ENCODE measurements at regions of chr17 and their contacts with region 1.

Region 1: DNA sequence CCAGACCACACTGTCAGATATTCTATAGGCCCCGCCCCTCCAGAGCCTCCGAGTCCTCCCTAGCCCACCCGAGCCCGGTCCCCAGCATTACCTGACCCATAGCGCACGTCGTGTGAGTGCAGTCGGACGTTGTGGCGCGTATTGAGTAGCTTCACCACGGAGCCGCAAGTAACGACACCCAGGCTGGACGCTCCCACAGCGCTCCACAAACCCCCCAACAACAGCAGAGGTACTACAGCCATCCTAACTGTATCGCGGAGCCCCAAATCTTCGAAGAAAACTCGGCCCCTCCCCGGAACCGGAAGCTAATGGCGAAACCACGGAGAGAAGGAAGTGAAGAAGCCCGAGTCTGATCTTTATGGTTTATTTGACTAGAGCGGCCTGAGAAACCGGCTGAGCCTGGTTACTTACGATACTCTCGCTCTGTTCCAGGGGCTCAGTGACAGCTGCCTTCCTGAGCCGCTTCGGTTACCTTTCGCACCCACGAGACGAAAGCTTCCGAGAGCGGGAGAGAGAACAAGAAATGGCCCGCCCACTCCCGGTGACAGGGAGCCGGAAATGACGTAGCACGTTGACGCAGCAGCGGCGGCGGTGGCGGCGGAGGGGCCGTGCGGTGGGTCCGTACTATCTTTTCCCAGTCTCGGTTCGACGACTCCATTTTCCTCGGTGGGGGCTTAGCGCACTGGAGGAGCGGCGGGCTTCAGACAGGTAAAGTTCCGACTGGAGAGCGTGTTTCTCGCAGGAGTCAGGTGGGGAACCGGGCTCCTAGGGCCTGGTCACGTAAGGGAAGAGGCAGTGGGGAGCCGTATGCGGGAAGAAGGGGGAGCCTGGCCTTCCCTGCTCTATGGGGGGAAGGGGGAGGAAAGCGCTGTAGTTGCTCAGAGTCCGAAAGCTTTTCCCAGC is at the starts of genes SDF2 and SUPT6H:
- DNase-seq: peak; percentile 78
- ATAC-seq: peak; percentile 84
- H3K4me3 ChIP-seq: peak within 1 kb of the TSS; percentile 96
- H3K27ac ChIP-seq: peak within 1 kb of the TSS; percentile 87
- H3K4me1 ChIP-seq: peaks cover 16% of the 10 kb centered on the region
- H3K27me3 ChIP-seq: no peaks in the 10 kb centered on the region
- CTCF ChIP-seq: no peak
- total RNA-seq, gene SDF2: 31.6 and 34.0 TPM in 2 replicates
- total RNA-seq, gene SUPT6H: 32.2 and 38.8 TPM in 2 replicates

Region 2: DNA sequence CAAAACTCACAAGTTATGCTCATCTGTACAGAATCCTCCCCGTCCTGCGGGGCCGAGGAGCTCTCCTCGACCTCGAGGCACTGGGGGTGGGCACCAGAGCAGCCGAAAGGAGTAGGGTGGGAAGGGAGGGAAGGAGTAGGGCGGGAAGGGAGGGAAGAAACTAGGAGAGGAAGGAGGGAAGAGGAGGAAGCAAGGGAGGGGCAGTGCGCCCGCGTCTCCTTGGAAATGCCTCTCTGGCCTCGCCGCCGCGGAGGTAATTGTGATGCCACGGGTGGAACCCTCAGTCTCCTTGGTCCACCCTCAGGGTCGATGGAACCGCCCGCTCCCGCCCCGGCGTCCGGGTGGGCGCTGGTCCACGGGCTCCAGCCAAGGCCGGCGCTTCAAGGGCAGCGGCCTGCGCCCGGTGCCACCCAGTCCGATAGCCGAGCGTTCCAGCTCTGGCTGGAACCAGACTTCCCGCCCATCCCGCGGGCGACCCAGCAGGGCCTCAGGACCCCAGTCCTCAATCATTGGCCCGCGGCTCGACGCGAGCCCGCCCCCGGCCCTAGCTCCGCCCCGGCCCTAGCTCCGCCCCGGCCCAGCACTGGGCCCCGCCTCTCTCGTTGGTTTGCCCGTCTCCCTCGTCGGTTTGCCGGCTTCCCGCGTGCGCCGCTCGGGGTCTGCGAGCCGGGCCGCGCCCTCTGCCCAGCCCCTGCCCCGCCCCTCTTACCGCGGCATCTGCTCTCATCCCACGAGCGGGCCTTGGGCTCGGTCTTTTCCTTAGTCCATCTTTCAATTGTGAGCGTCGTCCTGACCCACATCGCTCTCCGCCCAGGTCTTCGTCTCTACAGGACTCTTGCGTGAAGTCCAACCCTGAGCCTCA is 49.2 kb after region 1 on chr17:
- CTCF ChIA-PET with region 1: no interaction called
- POLR2A ChIA-PET with region 1: no interaction called
- intact Hi-C with region 1: no loop called
- DNase-seq: peak; percentile 87
- ATAC-seq: peak; percentile 96
- H3K4me3 ChIP-seq: peak overlapping the region; percentile 74
- H3K27ac ChIP-seq: peak overlapping the region; percentile 70
- H3K4me1 ChIP-seq: peaks cover 4% of the 10 kb centered on the region; the same call in 1 of the 2 replicates
- H3K27me3 ChIP-seq: no peaks in the 10 kb centered on the region
- CTCF ChIP-seq: no peak

Region 3: GRCh38 chr17:28812748-28813377 is 151.0 kb after region 1 on chr17:
- CTCF ChIA-PET with region 1: no interaction called
- POLR2A ChIA-PET with region 1: interaction called, 25 read pairs
- intact Hi-C with region 1: no loop called
- DNase-seq: no peak
- ATAC-seq: peak; percentile 9
- H3K4me3 ChIP-seq: peak overlapping the region; percentile 79
- H3K27ac ChIP-seq: peak overlapping the region; percentile 86
- H3K4me1 ChIP-seq: peaks cover 34% of the 10 kb centered on the region
- H3K27me3 ChIP-seq: no peaks in the 10 kb centered on the region
- CTCF ChIP-seq: no peak

Measured in PC-3 (cell line).